Activated CD4-positive, alpha-beta memory T cell treated with anti-CD3 and anti-CD28 coated beads for 36 hours (primary cell): ENCODE measurements at regions of chr7 and their contacts with region 1.

Region 1: GRCh38 chr7:17255926-17256325 is 42.5 kb upstream of the AHR start:
- DNase-seq: no peak
- H3K4me3 Mint-ChIP-seq: no peak overlapping the region
- H3K27ac Mint-ChIP-seq: no peak overlapping the region
- H3K4me1 Mint-ChIP-seq: peaks cover 21% of the 10 kb centered on the region
- H3K27me3 Mint-ChIP-seq: no peaks in the 10 kb centered on the region

Region 2: DNA sequence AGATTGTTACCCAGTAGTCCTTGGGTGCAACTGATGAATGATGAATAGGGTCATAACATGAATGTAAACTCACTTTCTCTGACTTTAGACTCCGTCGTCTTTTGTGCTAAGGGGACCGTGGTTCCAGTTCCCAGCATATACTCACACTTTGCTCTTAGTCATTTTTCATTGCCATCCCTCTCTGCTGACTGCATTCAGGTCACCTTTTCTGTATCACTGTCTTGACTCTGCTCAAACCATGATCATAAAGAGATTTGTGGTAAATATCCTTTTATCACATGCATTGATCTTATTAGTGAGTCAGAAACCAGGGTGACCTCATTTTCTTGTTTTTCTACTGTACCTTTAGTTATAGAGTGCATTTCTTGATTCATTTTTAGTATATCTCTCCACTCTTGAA is 233.0 kb before region 1 on chr7:
- CTCF ChIA-PET with region 1: no interaction called
- POLR2A ChIA-PET with region 1: no interaction called
- intact Hi-C with region 1: loop called (anchors 1 kb)
- DNase-seq: peak; percentile 60
- H3K4me3 Mint-ChIP-seq: no peak overlapping the region
- H3K27ac Mint-ChIP-seq: peak overlapping the region; percentile 7
- H3K4me1 Mint-ChIP-seq: peaks cover 17% of the 10 kb centered on the region
- H3K27me3 Mint-ChIP-seq: peaks cover 1% of the 10 kb centered on the region

Region 3: DNA sequence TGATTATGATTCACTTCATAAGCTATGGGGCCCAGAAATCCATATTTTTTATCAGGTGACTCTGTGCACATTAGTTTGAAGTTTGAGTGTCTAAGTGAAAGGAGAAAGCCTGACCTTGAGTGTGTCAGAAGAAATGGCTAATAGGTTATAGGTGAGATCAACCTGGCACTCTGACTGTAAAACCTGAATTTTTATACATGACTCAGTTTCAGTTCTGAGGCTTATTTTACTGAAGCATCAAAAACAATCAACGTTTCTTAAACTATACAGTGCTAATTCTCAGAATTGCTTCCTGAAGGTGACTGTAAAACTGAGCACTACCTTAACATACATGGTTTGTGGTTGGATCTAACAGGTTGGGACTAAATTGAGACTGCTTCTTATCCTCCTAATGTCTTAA is 116.8 kb before region 1 on chr7:
- CTCF ChIA-PET with region 1: no interaction called
- POLR2A ChIA-PET with region 1: no interaction called
- intact Hi-C with region 1: loop called (anchors 1 kb)
- DNase-seq: no peak
- H3K4me3 Mint-ChIP-seq: no peak overlapping the region
- H3K27ac Mint-ChIP-seq: peak overlapping the region; percentile 82
- H3K4me1 Mint-ChIP-seq: peaks cover 70% of the 10 kb centered on the region
- H3K27me3 Mint-ChIP-seq: no peaks in the 10 kb centered on the region

Region 4: DNA sequence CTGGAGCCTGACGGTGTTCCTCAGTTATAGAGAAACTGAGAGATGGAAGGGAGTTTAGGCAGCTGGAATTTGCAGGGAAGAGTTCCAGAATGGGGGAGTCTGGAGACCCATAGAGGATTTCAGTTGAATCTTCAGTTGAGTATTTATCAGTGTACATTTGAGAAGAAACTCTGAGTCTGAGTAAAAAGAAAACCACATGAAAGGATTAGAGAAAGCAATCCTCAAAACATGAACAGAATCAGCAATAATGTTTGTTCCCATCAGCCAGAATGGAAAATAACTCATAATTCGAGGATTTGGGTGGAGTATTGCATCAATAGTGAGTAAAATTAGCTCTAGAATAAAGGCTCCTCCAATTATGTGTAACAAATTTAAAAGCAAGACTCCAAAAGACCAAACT is 87.5 kb before region 1 on chr7:
- CTCF ChIA-PET with region 1: no interaction called
- POLR2A ChIA-PET with region 1: no interaction called
- intact Hi-C with region 1: loop called (anchors 1 kb)
- DNase-seq: no peak
- H3K4me3 Mint-ChIP-seq: no peak overlapping the region
- H3K27ac Mint-ChIP-seq: no peak overlapping the region
- H3K4me1 Mint-ChIP-seq: peaks cover 25% of the 10 kb centered on the region
- H3K27me3 Mint-ChIP-seq: no peaks in the 10 kb centered on the region

Region 5: GRCh38 chr7:17178545-17178944 is 77.4 kb before region 1 on chr7:
- CTCF ChIA-PET with region 1: no interaction called
- POLR2A ChIA-PET with region 1: no interaction called
- intact Hi-C with region 1: no loop called
- DNase-seq: no peak
- H3K4me3 Mint-ChIP-seq: no peak overlapping the region
- H3K27ac Mint-ChIP-seq: no peak overlapping the region
- H3K4me1 Mint-ChIP-seq: peaks cover 4% of the 10 kb centered on the region
- H3K27me3 Mint-ChIP-seq: no peaks in the 10 kb centered on the region

Region 6: DNA sequence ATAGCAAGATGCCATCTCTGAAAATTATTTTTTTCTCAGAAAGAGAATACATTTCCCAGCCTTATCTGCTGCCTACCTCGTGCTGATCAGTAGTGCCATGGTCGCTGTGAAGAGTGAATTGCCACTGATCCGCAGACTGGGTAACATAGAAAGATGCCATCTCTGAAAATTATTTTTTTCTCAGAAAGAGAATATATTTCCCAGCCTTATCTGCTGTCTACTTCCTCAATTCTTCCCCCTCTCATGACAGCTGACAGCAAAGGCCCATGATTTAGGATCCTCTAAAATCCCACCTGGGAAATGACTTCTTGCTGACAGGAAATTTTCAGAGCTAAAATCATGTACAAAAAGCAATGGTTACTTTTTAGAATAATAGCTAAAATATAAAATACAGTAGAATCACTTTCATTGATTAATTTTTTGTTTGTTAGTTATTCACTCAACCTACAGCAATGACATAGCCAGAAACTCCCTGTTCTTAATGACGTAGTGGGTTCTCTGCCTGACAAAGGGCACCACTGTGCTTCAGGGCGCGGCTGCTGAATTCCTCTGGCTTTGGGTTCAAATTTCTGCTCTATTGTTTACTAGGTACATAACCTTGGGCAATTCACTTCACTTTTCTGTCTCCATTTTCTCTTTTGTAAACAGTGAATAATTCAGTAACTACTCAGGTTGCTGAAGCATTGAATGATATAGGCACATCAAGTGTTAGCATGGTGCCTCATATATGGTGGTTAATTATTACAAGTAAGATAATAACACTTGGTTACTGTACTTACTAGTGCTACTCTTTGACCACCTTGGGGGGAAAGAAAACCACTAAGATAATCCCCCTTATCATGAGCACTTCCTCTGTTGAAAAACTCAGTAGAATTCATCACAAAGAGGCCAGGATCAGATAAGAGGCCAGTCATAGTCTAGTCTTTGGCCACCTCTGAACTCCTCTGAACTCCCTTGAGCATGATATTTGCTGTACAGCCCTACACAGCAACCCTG is 49.7 kb before region 1 on chr7:
- CTCF ChIA-PET with region 1: no interaction called
- POLR2A ChIA-PET with region 1: no interaction called
- intact Hi-C with region 1: no loop called
- DNase-seq: no peak
- H3K4me3 Mint-ChIP-seq: no peak overlapping the region
- H3K27ac Mint-ChIP-seq: no peak overlapping the region
- H3K4me1 Mint-ChIP-seq: no peaks in the 10 kb centered on the region
- H3K27me3 Mint-ChIP-seq: no peaks in the 10 kb centered on the region

Region 7: DNA sequence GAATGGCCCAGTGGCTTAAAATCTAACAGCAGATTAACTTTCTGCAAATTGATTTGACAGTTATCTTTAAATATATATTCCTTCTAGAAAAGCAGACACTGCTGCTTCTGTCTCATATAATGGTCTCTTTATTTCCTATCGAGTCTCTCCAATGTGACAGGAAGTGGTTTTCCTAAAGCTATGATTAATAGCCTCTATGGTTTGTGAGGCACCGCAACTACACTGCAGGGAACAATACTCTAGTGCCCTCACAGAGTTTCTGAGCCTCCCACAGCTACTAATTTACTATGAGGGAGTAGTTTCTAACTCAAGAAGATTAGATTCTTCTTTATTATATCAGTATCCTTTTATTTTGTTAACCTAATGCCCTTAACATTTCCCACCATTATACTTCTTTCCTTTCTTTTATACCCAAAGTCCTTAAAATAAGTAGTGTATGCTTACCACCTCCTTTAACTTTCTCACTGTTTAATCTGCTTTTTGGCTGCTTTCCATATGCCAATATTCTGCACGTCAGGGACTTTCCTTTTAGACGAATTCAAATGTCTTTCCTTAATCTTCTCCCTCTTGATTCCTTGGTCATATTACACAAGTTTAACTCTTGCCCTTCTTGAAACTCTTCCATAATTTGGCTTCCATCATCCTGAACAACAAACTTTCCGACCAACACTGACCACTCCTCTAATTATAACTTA is 18.8 kb after region 1 on chr7:
- CTCF ChIA-PET with region 1: no interaction called
- POLR2A ChIA-PET with region 1: no interaction called
- intact Hi-C with region 1: loop called (anchors 1 kb)
- DNase-seq: peak; percentile 42
- H3K4me3 Mint-ChIP-seq: no peak overlapping the region
- H3K27ac Mint-ChIP-seq: no peak overlapping the region
- H3K4me1 Mint-ChIP-seq: peaks cover 19% of the 10 kb centered on the region
- H3K27me3 Mint-ChIP-seq: no peaks in the 10 kb centered on the region

Region 8: GRCh38 chr7:17333212-17333611 is 77.3 kb after region 1 on chr7:
- CTCF ChIA-PET with region 1: no interaction called
- POLR2A ChIA-PET with region 1: no interaction called
- intact Hi-C with region 1: no loop called
- DNase-seq: no peak
- H3K4me3 Mint-ChIP-seq: no peak overlapping the region
- H3K27ac Mint-ChIP-seq: no peak overlapping the region
- H3K4me1 Mint-ChIP-seq: peaks cover under 1% of the 10 kb centered on the region
- H3K27me3 Mint-ChIP-seq: no peaks in the 10 kb centered on the region

Region 9: DNA sequence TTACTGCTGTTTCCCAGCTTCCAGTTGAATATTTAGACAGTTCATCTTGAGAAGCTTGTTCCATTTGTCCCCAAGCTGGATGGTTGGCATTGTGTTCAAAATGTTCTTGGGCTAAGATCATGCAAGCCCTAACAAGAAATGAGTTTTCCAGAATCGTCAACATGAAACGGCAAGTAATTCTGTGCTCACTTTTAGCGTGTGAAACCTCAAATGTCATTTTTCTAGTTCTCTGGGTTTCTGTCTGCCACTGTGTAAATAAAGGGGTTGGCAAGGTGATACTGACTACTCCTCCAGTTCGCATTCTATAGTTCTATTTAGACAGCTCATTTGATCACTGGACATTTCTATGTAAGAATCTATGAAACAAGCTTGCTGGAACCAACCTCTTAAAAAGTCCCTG is 236.5 kb after region 1 on chr7:
- CTCF ChIA-PET with region 1: no interaction called
- POLR2A ChIA-PET with region 1: no interaction called
- intact Hi-C with region 1: loop called (anchors 2 kb)
- DNase-seq: no peak
- H3K4me3 Mint-ChIP-seq: no peak overlapping the region
- H3K27ac Mint-ChIP-seq: no peak overlapping the region
- H3K4me1 Mint-ChIP-seq: peaks cover 11% of the 10 kb centered on the region
- H3K27me3 Mint-ChIP-seq: no peaks in the 10 kb centered on the region

Region 10: GRCh38 chr7:17564678-17565212 is 308.8 kb after region 1 on chr7:
- CTCF ChIA-PET with region 1: no interaction called
- POLR2A ChIA-PET with region 1: no interaction called
- intact Hi-C with region 1: no loop called
- DNase-seq: no peak
- H3K4me3 Mint-ChIP-seq: no peak overlapping the region
- H3K27ac Mint-ChIP-seq: no peak overlapping the region
- H3K4me1 Mint-ChIP-seq: no peaks in the 10 kb centered on the region
- H3K27me3 Mint-ChIP-seq: peaks cover 14% of the 10 kb centered on the region